ENCODE measurements at regions of chr15 and their contacts with region 1.

Region 1: GRCh38 chr15:99755692-99756409 is 22.6 kb upstream of the LYSMD4 start:
- DNase-seq: peak; percentile 52 to 58 (median 53)
- ATAC-seq: peak; percentile 92
- H3K4me3 ChIP-seq: no peak overlapping the region
- H3K4me1 ChIP-seq: no peaks in the 10 kb centered on the region
- CTCF ChIP-seq: peak; percentile 55

Region 2: DNA sequence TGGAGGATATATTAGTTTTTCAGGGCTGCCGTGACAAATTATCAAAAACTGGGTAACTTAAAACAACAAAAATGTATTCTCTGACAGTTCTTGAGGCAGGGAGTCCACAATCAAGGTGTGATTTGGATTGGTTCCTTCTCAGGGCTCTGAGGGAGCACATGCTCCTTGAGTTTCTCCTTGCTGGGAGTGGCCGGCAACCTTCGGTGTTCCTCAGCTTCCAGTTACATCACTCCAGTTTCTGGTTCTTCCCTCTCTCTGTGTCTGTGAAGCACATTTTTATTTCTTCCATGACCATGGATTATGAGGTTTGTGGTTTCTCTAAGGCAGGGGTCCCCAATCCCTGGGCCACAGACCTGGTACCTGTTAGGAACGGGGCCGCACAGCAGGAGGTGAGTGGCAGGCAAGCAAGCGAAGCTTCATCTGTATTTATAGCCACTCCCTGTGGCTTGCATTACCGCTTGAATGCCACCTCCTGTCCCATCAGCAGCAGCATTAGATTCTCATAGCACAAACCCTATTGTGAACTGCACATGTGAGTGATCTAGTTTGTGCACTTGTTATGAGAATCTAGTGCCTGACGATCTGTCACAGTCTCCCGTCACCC is 480.2 kb before region 1 on chr15:
- intact Hi-C with region 1: loop called in 1 of 2 experiments (anchors 10 kb)
- DNase-seq: no peak
- ATAC-seq: no peak
- H3K4me3 ChIP-seq: no peak overlapping the region
- H3K4me1 ChIP-seq: no peaks in the 10 kb centered on the region
- CTCF ChIP-seq: no peak